Activated CD4-positive, alpha-beta T cell treated with anti-CD3 and anti-CD28 coated beads, Interleukin-2, amount 10 ng/mL, durations not matched to agents 24 days and 14 days (primary cell): ENCODE measurements at regions of chr13 and their contacts with region 1.

Region 1: DNA sequence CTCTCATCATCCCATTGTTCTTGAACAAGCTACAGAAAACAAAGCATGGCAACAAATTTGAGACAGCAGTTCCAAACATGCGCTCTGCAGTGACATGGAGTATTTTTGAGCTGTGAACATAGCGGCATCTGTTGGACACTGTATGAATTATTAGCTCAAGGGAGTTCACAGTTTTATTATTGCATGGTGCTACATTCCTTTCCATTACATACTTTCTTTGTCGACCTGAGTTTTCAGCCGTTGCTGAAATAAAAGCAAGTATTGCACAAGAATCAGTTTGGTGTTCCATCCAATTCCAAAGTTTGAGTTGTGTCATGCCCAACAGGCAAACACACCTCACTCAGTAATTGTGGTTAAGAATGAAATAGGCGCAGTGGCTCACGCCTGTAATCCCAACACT is 30.1 kb upstream of the METTL21C start:
- DNase-seq: peak; percentile 65
- H3K4me3 Mint-ChIP-seq: no peak overlapping the region
- H3K27ac Mint-ChIP-seq: no peak overlapping the region
- H3K4me1 Mint-ChIP-seq: peaks cover 3% of the 10 kb centered on the region
- H3K27me3 Mint-ChIP-seq: peaks cover 30% of the 10 kb centered on the region

Region 2: GRCh38 chr13:102580552-102581169 is 144.3 kb before region 1 on chr13:
- intact Hi-C with region 1: loop called (anchors 1 kb)
- DNase-seq: peak; percentile 85
- H3K4me3 Mint-ChIP-seq: no peak overlapping the region
- H3K27ac Mint-ChIP-seq: no peak overlapping the region
- H3K4me1 Mint-ChIP-seq: peaks cover 9% of the 10 kb centered on the region
- H3K27me3 Mint-ChIP-seq: peaks cover 16% of the 10 kb centered on the region

Region 3: GRCh38 chr13:102773441-102774215 is 48.7 kb after region 1 on chr13 and contains the start of gene TEX30:
- intact Hi-C with region 1: no loop called
- DNase-seq: peak; percentile 98
- H3K4me3 Mint-ChIP-seq: peak within 1 kb of the TSS; percentile 87
- H3K27ac Mint-ChIP-seq: peak within 1 kb of the TSS; percentile 93
- H3K4me1 Mint-ChIP-seq: peaks cover 49% of the 10 kb centered on the region
- H3K27me3 Mint-ChIP-seq: no peaks in the 10 kb centered on the region
- total RNA-seq, gene TEX30: 55.4 and 65.6 TPM in 2 replicates

Region 4: DNA sequence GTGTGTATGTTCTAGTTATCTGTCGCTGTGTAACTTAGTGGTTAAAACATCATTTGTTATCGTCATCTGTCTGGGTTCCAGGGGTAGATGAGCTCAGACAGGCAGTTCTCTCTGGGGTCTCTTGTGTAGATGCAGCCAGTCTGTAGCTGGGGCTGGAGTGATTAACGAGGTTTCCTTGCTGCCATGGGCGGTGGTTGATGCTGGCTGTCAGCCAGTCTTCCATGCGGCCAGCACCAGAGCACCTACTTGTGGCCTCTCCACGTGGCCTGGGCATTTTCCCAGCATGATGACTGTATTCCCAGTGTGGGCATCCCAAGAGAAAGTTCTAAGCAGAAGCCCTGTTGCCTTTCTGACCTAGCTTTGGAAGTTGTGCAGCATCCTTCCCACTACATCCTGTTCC is 131.6 kb after region 1 on chr13:
- intact Hi-C with region 1: no loop called
- DNase-seq: peak; percentile 53
- H3K4me3 Mint-ChIP-seq: no peak overlapping the region
- H3K27ac Mint-ChIP-seq: no peak overlapping the region
- H3K4me1 Mint-ChIP-seq: peaks cover 13% of the 10 kb centered on the region
- H3K27me3 Mint-ChIP-seq: no peaks in the 10 kb centered on the region

Region 5: DNA sequence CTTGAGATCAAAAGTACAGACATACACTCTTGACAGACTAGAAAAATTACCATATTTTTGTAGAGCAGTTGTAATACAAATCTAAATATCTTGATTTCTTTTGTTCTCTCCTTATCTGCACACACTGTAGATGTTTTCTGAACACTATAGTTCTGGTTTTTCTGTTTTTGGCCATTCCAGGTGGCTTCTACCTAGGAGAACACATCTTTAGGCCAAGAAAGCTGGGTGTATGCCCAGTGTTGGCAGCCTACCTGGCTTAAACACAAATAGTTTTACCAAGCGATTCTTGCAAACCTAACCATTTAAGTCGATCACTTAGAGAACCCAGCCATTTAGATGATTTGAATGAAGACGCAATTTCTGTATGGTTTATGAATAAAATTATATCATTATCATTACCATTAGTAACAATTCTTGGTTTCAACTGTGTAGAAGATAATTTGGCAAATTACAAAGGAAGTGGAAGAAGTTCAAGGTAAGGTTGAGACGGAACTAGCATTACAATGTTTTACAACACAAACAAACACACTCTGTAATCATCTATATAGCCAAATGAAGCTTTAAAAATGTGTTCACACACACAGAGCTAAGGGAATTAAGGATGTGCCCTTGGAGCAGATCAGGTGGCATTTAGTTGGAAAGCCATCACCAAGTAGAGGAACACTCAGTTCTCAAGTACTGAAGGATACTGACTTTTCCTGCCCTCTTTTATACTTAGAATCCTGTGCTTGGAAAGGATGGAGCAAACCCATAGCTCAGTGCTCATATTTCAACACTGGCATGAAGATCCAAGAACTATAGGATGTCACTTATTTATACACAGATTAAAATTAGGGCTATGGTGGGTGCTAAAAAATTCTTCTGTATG is 157.1 kb after region 1 on chr13:
- intact Hi-C with region 1: no loop called
- DNase-seq: no peak
- H3K4me3 Mint-ChIP-seq: no peak overlapping the region
- H3K27ac Mint-ChIP-seq: no peak overlapping the region
- H3K4me1 Mint-ChIP-seq: no peaks in the 10 kb centered on the region
- H3K27me3 Mint-ChIP-seq: no peaks in the 10 kb centered on the region